BJ (cell line): ENCODE measurements at regions of chr20 and their contacts with region 1.

Region 1: GRCh38 chr20:57585115-57585461 is 24.2 kb downstream of the PCK1 start:
- DNase-seq: no peak
- H3K4me3 ChIP-seq: no peak overlapping the region
- H3K27me3 ChIP-seq: peaks cover 10% of the 10 kb centered on the region
- CTCF ChIP-seq: no peak

Region 2: GRCh38 chr20:58188527-58188926 is 603.4 kb after region 1 on chr20:
- CTCF ChIA-PET with region 1: no interaction called
- POLR2A ChIA-PET with region 1: interaction called, 13 read pairs
- DNase-seq: no peak
- H3K4me3 ChIP-seq: no peak overlapping the region
- H3K27me3 ChIP-seq: peaks cover 5% of the 10 kb centered on the region; the same call in 1 of the 2 replicates
- CTCF ChIP-seq: no peak